Endothelial cell of umbilical vein (primary cell): ENCODE measurements at regions of chr14 and their contacts with region 1.

Region 1: GRCh38 chr14:35215110-35215876 is 76.9 kb upstream of the PSMA6 start:
- DNase-seq: peak; percentile 62
- H3K4me3 ChIP-seq: no peak overlapping the region
- H3K27ac ChIP-seq: peak overlapping the region; percentile 41
- H3K4me1 ChIP-seq: peaks cover 20% of the 10 kb centered on the region
- H3K27me3 ChIP-seq: no peaks in the 10 kb centered on the region
- CTCF ChIP-seq: no peak
- POLR2A ChIP-seq: no peak

Region 2: GRCh38 chr14:35140718-35141581 is 74.3 kb before region 1 on chr14:
- CTCF ChIA-PET with region 1: interaction called, 11 read pairs
- POLR2A ChIA-PET with region 1: no interaction called
- dilution Hi-C with region 1: no loop called
- intact Hi-C with region 1: loop called (anchors 2 kb)
- DNase-seq: peak; percentile 51
- H3K4me3 ChIP-seq: no peak overlapping the region
- H3K27ac ChIP-seq: no peak overlapping the region
- H3K4me1 ChIP-seq: no peaks in the 10 kb centered on the region
- H3K27me3 ChIP-seq: no peaks in the 10 kb centered on the region
- CTCF ChIP-seq: no peak
- POLR2A ChIP-seq: no peak

Region 3: DNA sequence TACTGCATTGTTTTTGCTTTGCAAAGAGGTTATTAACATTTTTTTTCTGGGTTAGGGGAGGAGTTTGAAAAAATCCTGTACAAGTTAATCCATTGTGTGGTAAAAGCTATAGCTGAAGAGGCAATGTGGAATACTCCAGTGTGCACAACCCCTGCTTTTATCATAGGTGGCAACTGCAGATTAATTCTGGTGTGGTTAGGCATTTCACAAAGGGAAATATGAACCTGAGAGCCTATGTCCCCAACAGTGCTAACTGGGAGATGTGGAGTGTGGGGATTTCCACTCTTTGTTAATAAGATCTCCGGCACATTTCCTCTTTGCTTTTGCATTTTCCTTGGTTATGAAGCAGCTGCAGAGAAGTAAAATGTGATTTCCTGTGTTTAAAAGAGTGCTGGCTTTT is 59.3 kb before region 1 on chr14:
- CTCF ChIA-PET with region 1: interaction called, 10 read pairs
- POLR2A ChIA-PET with region 1: no interaction called
- dilution Hi-C with region 1: no loop called
- intact Hi-C with region 1: no loop called
- DNase-seq: peak; percentile 87
- H3K4me3 ChIP-seq: peak overlapping the region in 1 of 3 experiments; percentile 0
- H3K27ac ChIP-seq: peak overlapping the region; percentile 42
- H3K4me1 ChIP-seq: peaks cover 31% of the 10 kb centered on the region
- H3K27me3 ChIP-seq: no peaks in the 10 kb centered on the region
- CTCF ChIP-seq: no peak
- POLR2A ChIP-seq: no peak

Region 4: GRCh38 chr14:35229495-35230089 is 14.3 kb after region 1 on chr14:
- CTCF ChIA-PET with region 1: interaction called, 25 read pairs
- POLR2A ChIA-PET with region 1: interaction called, 3 read pairs
- dilution Hi-C with region 1: no loop called
- intact Hi-C with region 1: no loop called
- DNase-seq: peak; percentile 41
- H3K4me3 ChIP-seq: no peak overlapping the region
- H3K27ac ChIP-seq: no peak overlapping the region
- H3K4me1 ChIP-seq: no peaks in the 10 kb centered on the region
- H3K27me3 ChIP-seq: no peaks in the 10 kb centered on the region
- CTCF ChIP-seq: peak; percentile 9 to 10
- POLR2A ChIP-seq: no peak